Activated CD4-positive, alpha-beta memory T cell treated with anti-CD3 and anti-CD28 coated beads, Interleukin-2, amount 10 ng/mL, durations not matched to agents 7 days and 5 days (primary cell): ENCODE measurements at regions of chr15 and their contacts with region 1.

Region 1: DNA sequence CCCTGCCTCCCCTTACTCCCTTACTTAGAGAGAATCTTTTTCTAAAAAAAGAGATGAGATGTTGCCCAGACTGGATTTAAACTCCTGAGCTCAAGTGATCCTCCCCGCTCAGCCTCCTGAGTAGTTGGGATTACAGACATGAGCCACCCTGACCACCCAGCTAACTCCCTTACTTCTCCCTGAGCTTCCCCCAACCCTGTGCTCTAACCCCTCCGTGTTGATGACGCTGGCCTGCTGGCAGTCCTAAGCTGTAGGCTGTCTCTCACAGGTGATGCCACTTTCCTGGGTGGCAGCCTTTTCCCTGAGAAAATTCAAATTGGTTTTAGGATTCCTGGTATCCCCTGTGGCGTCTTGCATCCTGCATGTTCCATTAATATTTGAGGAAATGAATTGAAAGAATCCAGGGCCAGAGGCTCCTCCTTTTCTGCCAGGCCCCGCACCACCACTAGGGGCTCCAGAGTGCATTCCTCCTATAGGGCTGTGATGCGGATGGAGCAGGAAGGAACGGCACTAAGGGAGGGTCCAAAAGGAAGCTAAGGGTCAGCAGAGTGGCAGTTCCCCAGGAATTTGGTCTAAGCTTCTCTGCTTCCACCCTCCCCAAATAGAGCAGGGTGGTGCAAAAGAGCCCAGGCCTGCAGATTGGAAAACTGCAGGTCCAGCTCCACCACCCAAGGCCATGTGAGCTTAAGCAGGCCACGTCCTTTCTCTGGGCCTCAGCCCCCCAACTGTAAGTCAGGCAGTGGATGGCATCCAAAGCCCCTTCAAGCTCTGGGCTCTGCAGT is 101.1 kb downstream of the DAPK2 start:
- DNase-seq: peak; percentile 76
- H3K4me3 Mint-ChIP-seq: no peak overlapping the region
- H3K27ac Mint-ChIP-seq: no peak overlapping the region
- H3K4me1 Mint-ChIP-seq: peaks cover 18% of the 10 kb centered on the region
- H3K27me3 Mint-ChIP-seq: no peaks in the 10 kb centered on the region

Region 2: GRCh38 chr15:63752075-63752684 is 193.0 kb before region 1 on chr15:
- CTCF ChIA-PET with region 1: interaction called, 11 read pairs
- POLR2A ChIA-PET with region 1: no interaction called
- DNase-seq: peak; percentile 38
- H3K4me3 Mint-ChIP-seq: no peak overlapping the region
- H3K27ac Mint-ChIP-seq: no peak overlapping the region
- H3K4me1 Mint-ChIP-seq: no peaks in the 10 kb centered on the region
- H3K27me3 Mint-ChIP-seq: no peaks in the 10 kb centered on the region

Region 3: DNA sequence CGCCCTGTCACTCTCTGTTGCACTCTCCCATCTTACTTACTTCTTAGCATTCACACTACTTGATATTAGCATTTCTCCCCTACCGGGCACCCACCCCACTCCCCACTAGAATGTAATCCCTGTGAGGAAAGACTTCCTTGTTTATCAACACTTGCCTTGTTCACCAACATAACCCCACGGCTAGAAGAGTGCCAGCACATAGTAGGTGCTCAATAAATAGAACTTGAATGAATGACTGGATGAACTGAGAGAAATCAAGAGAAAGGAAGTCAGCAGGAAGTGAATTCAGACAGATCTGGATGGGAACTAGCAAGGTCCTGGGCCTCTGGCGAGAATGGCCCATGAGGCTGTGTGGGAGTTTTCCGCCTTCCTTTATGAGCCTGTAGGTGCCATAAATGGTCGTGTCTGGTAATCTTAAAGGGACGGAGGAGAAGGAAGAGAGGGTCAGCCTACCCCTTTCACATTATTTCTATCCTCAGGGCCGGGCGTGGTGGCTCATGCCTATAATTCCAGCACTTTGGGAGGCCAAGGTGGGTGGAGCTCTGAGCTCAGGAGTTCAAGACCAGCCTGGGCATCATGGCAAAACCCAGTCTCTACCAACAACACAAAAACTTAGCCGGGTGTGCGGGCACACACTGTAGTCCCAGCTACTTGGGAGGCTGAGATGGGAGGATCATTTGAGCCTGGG is 69.0 kb before region 1 on chr15:
- CTCF ChIA-PET with region 1: no interaction called
- POLR2A ChIA-PET with region 1: no interaction called
- DNase-seq: no peak
- H3K4me3 Mint-ChIP-seq: no peak overlapping the region
- H3K27ac Mint-ChIP-seq: no peak overlapping the region
- H3K4me1 Mint-ChIP-seq: no peaks in the 10 kb centered on the region
- H3K27me3 Mint-ChIP-seq: no peaks in the 10 kb centered on the region

Region 4: GRCh38 chr15:63928185-63928842 is 16.9 kb before region 1 on chr15:
- CTCF ChIA-PET with region 1: interaction called, 11 read pairs
- POLR2A ChIA-PET with region 1: interaction called, 4 read pairs
- DNase-seq: no peak
- H3K4me3 Mint-ChIP-seq: no peak overlapping the region
- H3K27ac Mint-ChIP-seq: no peak overlapping the region
- H3K4me1 Mint-ChIP-seq: no peaks in the 10 kb centered on the region
- H3K27me3 Mint-ChIP-seq: peaks cover 5% of the 10 kb centered on the region

Region 5: GRCh38 chr15:63970621-63971426 is 25.6 kb after region 1 on chr15:
- CTCF ChIA-PET with region 1: interaction called, 32 read pairs
- POLR2A ChIA-PET with region 1: interaction called, 9 read pairs
- DNase-seq: peak; percentile 47
- H3K4me3 Mint-ChIP-seq: peak overlapping the region; percentile 65
- H3K27ac Mint-ChIP-seq: peak overlapping the region; percentile 96
- H3K4me1 Mint-ChIP-seq: peaks cover 47% of the 10 kb centered on the region
- H3K27me3 Mint-ChIP-seq: no peaks in the 10 kb centered on the region

Region 6: GRCh38 chr15:64038878-64039610 is 93.8 kb after region 1 on chr15:
- CTCF ChIA-PET with region 1: interaction called, 19 read pairs
- POLR2A ChIA-PET with region 1: interaction called, 3 read pairs
- DNase-seq: no peak
- H3K4me3 Mint-ChIP-seq: no peak overlapping the region
- H3K27ac Mint-ChIP-seq: no peak overlapping the region
- H3K4me1 Mint-ChIP-seq: no peaks in the 10 kb centered on the region
- H3K27me3 Mint-ChIP-seq: no peaks in the 10 kb centered on the region

Region 7: GRCh38 chr15:64067564-64068030 is 122.4 kb after region 1 on chr15:
- CTCF ChIA-PET with region 1: interaction called, 16 read pairs
- POLR2A ChIA-PET with region 1: no interaction called
- DNase-seq: peak; percentile 70
- H3K4me3 Mint-ChIP-seq: no peak overlapping the region
- H3K27ac Mint-ChIP-seq: peak overlapping the region; percentile 49
- H3K4me1 Mint-ChIP-seq: peaks cover 16% of the 10 kb centered on the region
- H3K27me3 Mint-ChIP-seq: no peaks in the 10 kb centered on the region